Dorsolateral prefrontal cortex (tissue), 120 donors: ENCODE measurements at regions of chr17 and their contacts with region 1.

Region 1: GRCh38 chr17:30378824-30379302 is at the start of gene CPD:
- DNase-seq: peak; percentile 96 to 99 (median 98)
- H3K4me3 ChIP-seq: peak within 1 kb of the TSS; percentile 71 to 100 (median 90)
- H3K27ac ChIP-seq: peak within 1 kb of the TSS; percentile 35 to 95 (median 87)
- H3K27me3 ChIP-seq: no peaks in the 10 kb centered on the region
- CTCF ChIP-seq: peak in 45 of 56 donors; percentile 7 to 88 (median 52)
- total RNA-seq, gene CPD: 45.2 to 97.3 (median 64.6) TPM

Region 2: GRCh38 chr17:30344283-30345088 is 34.4 kb before region 1 on chr17:
- intact Hi-C with region 1: loop called (anchors 2 to 5 kb)
- DNase-seq: peak in 9 of 10 donors; percentile 26 to 80 (median 56)
- H3K4me3 ChIP-seq: peak overlapping the region in 22 of 59 donors; percentile 7 to 38 (median 16)
- H3K27ac ChIP-seq: peak overlapping the region; percentile 21 to 98 (median 92)
- H3K27me3 ChIP-seq: no peaks in the 10 kb centered on the region
- CTCF ChIP-seq: peak in 13 of 56 donors; percentile 4 to 39 (median 17)